ENCODE measurements at regions of chr1 and their contacts with region 1.

Region 1: GRCh38 chr1:206912445-206913095 is 9.2 kb downstream of the FCMR start:
- DNase-seq: peak; percentile 84
- H3K4me3 ChIP-seq: no peak overlapping the region
- H3K27ac ChIP-seq: no peak overlapping the region
- H3K4me1 ChIP-seq: no peaks in the 10 kb centered on the region
- CTCF ChIP-seq: peak; percentile 90

Region 2: GRCh38 chr1:206635080-206635977 is 277.2 kb before region 1 on chr1 and contains the start of gene DYRK3:
- CTCF ChIA-PET with region 1: interaction called, 6 read pairs
- POLR2A ChIA-PET with region 1: no interaction called
- intact Hi-C with region 1: loop called (anchors 1 kb)
- DNase-seq: peak; percentile 94
- H3K4me3 ChIP-seq: peak within 1 kb of the TSS; percentile 83
- H3K27ac ChIP-seq: peak within 1 kb of the TSS; percentile 26
- H3K4me1 ChIP-seq: peaks cover 38% of the 10 kb centered on the region
- CTCF ChIP-seq: no peak; the same call in 1 of the 2 replicates
- total RNA-seq, gene DYRK3: 9.7 and 9.8 TPM in 2 replicates

Region 3: GRCh38 chr1:206734499-206735142 is 177.9 kb before region 1 on chr1:
- CTCF ChIA-PET with region 1: interaction called, 4 read pairs
- POLR2A ChIA-PET with region 1: no interaction called
- intact Hi-C with region 1: loop called (anchors 1 kb)
- DNase-seq: peak; percentile 67
- H3K4me3 ChIP-seq: no peak overlapping the region
- H3K27ac ChIP-seq: no peak overlapping the region
- H3K4me1 ChIP-seq: peaks cover 17% of the 10 kb centered on the region
- CTCF ChIP-seq: peak; percentile 91

Region 4: DNA sequence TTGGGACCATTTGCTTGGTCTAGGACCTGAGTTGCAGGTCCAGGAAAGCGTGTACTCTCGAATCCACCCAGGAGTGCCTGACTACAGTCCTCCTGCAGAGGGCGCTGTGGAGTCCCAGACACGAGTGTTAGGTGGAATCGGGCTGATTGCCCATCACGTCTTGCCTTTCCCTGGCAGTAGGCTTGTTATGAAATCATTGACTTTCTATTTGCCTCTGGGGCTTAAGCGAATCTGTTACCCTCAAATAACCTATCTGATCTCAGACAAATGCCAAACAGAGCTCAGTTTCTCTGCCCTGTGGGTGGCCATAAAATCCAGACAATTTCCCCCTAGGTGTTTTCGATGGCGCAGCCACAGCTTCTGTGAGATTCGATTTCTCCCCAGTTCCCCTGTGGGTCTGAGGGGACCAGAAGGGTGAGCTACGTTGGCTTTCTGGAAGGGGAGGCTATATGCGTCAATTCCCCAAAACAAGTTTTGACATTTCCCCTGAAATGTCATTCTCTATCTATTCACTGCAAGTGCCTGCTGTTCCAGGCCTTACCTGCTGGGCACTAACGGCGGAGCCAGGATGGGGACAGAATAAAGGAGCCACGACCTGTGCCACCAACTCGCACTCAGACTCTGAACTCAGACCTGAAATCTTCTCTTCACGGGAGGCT is 47.4 kb before region 1 on chr1 and contains the start of gene IL20:
- CTCF ChIA-PET with region 1: interaction called, 3 read pairs
- POLR2A ChIA-PET with region 1: no interaction called
- intact Hi-C with region 1: loop called (anchors 5 kb)
- DNase-seq: peak; percentile 69
- H3K4me3 ChIP-seq: no peak within 1 kb of the TSS
- H3K27ac ChIP-seq: no peak within 1 kb of the TSS
- H3K4me1 ChIP-seq: no peaks in the 10 kb centered on the region
- CTCF ChIP-seq: peak; percentile 89
- total RNA-seq, gene IL20: not detected in 2 replicates

Region 5: DNA sequence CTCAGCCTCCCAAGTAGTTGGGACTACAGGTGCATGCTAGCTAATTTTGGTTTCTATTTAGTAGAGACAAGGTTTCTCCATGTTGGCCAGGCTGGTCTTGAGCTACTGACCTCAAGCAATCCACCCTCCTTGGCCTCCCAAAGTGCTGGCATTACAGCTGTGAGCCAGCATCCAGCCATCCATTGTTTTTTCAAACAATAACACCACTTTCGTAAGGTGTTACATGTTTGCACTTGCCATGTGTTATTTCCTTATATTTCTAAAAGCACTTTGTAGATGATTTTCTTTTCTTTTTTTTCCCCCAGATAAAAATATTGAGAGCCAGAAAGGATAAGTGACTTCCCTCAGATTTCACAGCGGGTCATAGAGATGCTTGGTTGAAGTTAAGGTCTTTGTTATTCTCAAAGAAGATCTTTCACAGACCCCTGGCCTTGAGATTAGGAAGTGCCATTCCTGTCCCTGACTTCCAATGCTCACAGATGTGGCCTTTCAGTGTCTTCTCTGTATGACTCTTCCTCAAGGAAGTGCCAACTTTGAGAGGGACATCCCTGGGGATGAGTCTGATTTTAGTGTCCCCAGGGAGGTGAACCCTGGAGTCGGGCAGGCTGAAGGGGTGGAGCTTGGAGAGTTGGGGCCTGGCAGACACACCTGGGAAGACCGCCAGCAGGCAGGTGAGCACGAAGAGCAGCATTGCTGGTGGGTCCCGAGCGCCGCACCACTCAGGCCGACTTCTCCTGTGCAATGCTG is 27.4 kb after region 1 on chr1:
- CTCF ChIA-PET with region 1: no interaction called
- POLR2A ChIA-PET with region 1: no interaction called
- intact Hi-C with region 1: no loop called
- DNase-seq: no peak
- H3K4me3 ChIP-seq: no peak overlapping the region
- H3K27ac ChIP-seq: no peak overlapping the region
- H3K4me1 ChIP-seq: no peaks in the 10 kb centered on the region
- CTCF ChIP-seq: no peak

Region 6: GRCh38 chr1:206982216-206982615 is 69.6 kb after region 1 on chr1:
- CTCF ChIA-PET with region 1: interaction called, 4 read pairs
- POLR2A ChIA-PET with region 1: no interaction called
- intact Hi-C with region 1: loop called (anchors 1 kb)
- DNase-seq: peak; percentile 62
- H3K4me3 ChIP-seq: no peak overlapping the region
- H3K27ac ChIP-seq: no peak overlapping the region
- H3K4me1 ChIP-seq: no peaks in the 10 kb centered on the region
- CTCF ChIP-seq: peak; percentile 83